Sigmoid colon (tissue), 7 donors: ENCODE measurements at regions of chr1 and their contacts with region 1.

Region 1: DNA sequence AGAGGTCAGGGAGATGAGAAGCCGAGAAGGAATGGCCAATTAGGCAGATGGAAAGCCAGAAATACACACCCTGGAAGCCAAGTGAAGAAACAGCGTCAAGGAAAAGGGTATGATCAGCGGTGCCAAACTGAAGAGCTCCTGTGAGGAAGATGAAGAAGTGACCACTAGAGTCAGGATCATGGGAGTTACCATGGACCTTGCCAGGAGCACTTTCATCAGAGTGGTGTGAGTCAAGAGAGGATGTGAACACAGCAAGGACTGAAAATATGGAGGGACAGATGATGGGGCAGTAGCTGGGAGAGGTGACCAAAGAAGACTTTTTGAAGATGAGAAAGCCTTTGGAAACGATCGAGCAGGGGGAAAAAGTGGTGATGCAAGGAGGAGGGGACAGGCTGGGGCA is 50.4 kb downstream of the CD34 start:
- DNase-seq: no peak
- H3K4me3 ChIP-seq: no peak overlapping the region
- H3K27ac ChIP-seq: no peak overlapping the region
- H3K4me1 ChIP-seq: peaks cover 0 to 83% (median 72%) of the 10 kb centered on the region in 4 donors
- H3K27me3 ChIP-seq: no peaks in the 10 kb centered on the region
- CTCF ChIP-seq: no peak
- EP300 ChIP-seq: no peak
- POLR2A ChIP-seq: no peak

Region 2: DNA sequence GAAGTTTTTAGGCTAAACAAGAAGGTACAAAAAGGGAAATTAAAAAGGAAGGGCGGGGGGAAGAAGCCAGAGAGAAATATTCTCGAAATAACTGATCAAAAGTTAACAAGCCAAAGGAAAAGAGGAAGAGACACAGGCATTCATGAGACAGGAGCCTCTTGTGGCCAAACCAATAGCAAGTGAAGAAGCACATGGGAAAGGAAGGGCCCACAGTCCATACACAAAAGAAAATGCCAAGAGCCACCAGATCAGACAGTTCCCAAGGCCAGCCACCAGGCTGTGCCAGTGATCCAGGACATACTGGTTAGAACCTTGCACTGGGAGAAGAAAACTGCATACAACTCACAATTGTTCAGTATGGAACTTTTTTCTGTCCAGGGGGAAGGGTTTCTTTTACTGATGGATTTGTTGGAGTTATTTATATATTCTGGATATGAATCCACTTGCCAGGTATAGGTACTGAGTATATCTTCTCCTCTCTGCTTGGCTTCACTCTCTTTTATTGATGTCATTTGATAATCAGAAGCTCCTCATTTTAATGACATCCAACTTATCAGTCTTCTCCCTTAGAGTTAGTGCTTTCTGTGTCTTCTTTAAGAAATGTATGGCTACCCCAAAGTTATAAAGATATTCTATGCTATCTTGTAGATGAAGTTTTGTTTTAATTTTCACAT is 31.9 kb before region 1 on chr1:
- intact Hi-C with region 1: no loop called
- DNase-seq: peak; percentile 91
- H3K4me3 ChIP-seq: no peak overlapping the region
- H3K27ac ChIP-seq: peak overlapping the region; percentile 91 to 99 (median 94)
- H3K4me1 ChIP-seq: peaks cover 0 to 94% (median 88%) of the 10 kb centered on the region in 4 donors
- H3K27me3 ChIP-seq: no peaks in the 10 kb centered on the region
- CTCF ChIP-seq: peak; percentile 86 to 97 (median 92)
- EP300 ChIP-seq: no peak
- POLR2A ChIP-seq: no peak

Region 3: GRCh38 chr1:207841901-207842300 is 18.6 kb before region 1 on chr1:
- intact Hi-C with region 1: loop called (anchors 1 kb)
- DNase-seq: no peak
- H3K4me3 ChIP-seq: no peak overlapping the region
- H3K27ac ChIP-seq: peak overlapping the region in 3 of 4 donors; percentile 6 to 32 (median 29)
- H3K4me1 ChIP-seq: peaks cover 0 to 79% (median 64%) of the 10 kb centered on the region in 4 donors
- H3K27me3 ChIP-seq: no peaks in the 10 kb centered on the region
- CTCF ChIP-seq: no peak
- EP300 ChIP-seq: no peak
- POLR2A ChIP-seq: no peak